Gastrocnemius medialis (tissue), 4 donors: ENCODE measurements at regions of chr11 and their contacts with region 1.

Region 1: DNA sequence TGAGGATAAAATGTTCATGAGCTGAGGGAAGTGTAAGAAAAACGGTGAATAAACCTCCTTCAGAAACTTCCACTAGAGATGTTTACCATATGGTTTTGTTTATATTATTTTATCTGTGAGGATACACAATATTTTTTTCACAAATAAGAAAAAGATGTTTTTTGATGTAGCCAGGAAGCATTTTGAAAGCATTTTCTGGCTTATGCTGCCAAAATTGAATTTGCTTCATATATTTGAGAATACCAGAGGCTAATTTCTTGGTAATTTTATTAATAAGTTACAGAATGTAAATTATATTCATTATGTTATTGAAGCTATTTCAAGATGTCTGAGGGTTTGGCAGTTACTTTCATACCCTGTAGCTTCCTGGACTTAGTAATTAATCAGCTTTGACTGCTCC is 686.6 kb downstream of the LUZP2 start:
- DNase-seq: no peak
- ATAC-seq: no peak
- H3K4me3 ChIP-seq: no peak overlapping the region
- H3K27ac ChIP-seq: no peak overlapping the region
- H3K4me1 ChIP-seq: no peaks in the 10 kb centered on the region
- H3K27me3 ChIP-seq: no peaks in the 10 kb centered on the region
- CTCF ChIP-seq: no peak
- POLR2A ChIP-seq: no peak

Region 2: DNA sequence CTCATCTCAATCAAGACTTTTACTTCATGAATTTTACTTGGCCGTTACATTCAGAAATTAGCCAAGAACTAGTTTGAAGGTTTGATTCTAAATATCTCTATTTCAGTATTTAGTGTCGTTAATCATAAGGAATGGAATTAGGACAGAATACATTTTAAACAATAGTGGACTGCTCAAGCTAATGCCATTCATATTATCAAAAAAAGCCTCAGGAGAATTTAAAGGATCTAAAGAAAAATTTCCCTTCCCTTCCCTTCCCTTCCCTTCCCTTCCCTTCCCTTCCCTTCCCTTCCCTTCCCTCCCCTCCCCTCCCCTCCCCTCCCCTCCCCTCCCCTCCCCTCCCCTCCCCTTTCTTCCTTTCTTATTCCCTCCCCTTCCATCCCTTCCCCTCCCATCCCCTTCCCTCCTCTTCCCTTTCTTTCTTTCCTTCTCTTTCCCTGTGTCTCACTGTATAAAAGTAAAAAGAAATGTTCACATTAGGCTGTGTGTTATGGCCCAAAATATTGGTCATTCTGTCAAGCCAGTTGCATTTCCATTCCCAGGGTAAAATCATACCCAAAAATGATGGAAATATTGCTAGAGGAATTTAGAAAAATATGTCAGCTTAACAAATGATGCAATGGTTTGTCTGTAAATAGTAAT is 31.2 kb after region 1 on chr11:
- in situ Hi-C with region 1: no loop called
- intact Hi-C with region 1: no loop called
- DNase-seq: no peak
- ATAC-seq: no peak
- H3K4me3 ChIP-seq: no peak overlapping the region
- H3K27ac ChIP-seq: no peak overlapping the region
- H3K4me1 ChIP-seq: no peaks in the 10 kb centered on the region
- H3K27me3 ChIP-seq: no peaks in the 10 kb centered on the region
- CTCF ChIP-seq: no peak
- POLR2A ChIP-seq: no peak

Region 3: GRCh38 chr11:25225078-25225477 is 41.7 kb after region 1 on chr11:
- in situ Hi-C with region 1: loop called in 1 of 4 experiments (anchors 10 kb)
- intact Hi-C with region 1: no loop called
- DNase-seq: no peak
- ATAC-seq: no peak
- H3K4me3 ChIP-seq: no peak overlapping the region
- H3K27ac ChIP-seq: no peak overlapping the region
- H3K4me1 ChIP-seq: no peaks in the 10 kb centered on the region
- H3K27me3 ChIP-seq: no peaks in the 10 kb centered on the region
- CTCF ChIP-seq: no peak
- POLR2A ChIP-seq: no peak

Region 4: GRCh38 chr11:25252854-25253253 is 69.4 kb after region 1 on chr11:
- in situ Hi-C with region 1: no loop called
- intact Hi-C with region 1: no loop called
- DNase-seq: no peak
- ATAC-seq: no peak
- H3K4me3 ChIP-seq: no peak overlapping the region
- H3K27ac ChIP-seq: no peak overlapping the region
- H3K4me1 ChIP-seq: no peaks in the 10 kb centered on the region
- H3K27me3 ChIP-seq: no peaks in the 10 kb centered on the region
- CTCF ChIP-seq: no peak
- POLR2A ChIP-seq: no peak